ENCODE measurements at regions of chr20 and their contacts with region 1.

Region 1: DNA sequence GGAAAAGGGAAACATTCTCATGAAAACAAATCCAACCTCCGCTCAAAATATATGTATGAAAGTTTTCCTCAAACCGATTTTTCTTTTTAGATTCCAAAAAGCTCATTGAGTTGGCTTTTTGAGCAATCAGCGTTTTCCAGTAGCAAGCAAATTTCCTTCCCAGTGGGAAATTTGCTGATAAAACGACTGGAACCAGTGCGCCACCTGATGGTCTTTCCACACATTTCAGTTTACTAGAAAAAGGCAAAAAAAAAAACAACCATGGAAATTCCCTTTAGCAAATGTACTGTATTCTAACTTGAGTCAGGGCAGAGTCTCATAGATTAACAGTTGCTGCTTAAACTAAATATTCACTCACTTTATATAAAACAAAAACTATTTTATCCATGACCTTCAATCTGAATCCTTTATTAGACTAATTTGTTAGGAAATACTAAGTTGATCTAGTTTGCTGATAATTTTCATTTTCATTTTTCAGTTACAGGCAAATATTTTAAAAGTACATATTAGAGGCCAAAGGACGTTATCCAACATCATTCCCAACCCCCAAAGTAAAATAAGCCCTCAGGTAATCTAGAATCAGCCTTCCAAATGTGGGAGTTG is 271.5 kb downstream of the FOXA2 start:
- DNase-seq: peak; percentile 61
- ATAC-seq: no peak

Region 2: DNA sequence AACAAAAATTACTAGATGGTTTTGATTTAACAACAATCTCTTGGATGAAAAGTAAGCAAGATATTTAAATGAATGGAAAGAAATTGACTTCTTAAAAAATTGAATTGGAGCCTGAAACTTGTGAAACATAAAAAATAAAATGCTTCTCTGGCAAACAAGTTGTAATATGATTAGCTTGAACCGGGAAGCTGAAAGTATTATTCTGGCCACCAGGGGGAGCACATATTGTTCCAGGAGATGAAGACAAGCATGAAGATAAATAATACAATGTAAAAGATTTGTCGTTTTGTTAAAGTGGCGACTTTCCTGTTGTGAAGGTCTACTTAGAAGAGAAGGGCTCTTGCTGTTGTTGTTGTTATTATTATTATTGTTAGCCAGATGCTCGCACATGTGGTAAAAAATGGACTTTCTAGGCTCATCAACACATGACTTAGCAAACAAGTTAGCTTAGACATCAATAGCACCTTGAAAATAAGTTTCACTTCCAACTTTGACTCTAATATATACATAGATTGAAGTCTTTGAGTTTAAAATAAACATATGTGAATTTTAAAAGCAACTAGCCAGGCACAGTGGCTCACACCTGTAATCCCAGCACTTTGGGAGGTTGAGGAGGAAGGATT is 593.1 kb before region 1 on chr20:
- intact Hi-C with region 1: loop called (anchors 10 kb)
- DNase-seq: no peak
- ATAC-seq: no peak

Region 3: DNA sequence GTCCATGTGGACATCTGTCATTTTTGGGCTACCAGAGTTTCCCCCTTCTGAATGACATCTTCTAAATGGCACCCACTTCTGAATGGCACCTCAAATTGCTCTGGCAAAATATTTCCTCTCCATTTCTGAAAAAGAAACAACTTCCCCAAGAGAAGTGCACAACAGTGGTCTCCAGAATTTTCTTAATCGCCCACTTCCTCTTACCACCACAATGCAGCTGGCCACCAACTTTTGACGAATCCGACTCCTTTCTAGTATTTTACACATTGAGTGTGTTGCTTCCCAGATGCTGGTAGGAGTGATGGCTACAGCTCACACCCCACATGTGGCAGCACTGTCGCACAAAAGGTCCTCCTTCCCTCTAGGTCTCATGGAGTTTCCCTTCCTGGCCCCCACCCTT is 55.4 kb after region 1 on chr20:
- intact Hi-C with region 1: no loop called
- DNase-seq: no peak
- ATAC-seq: no peak

Measured in sciatic nerve (tissue), 2 donors.